Posterior cingulate gyrus (tissue), 11 donors: ENCODE measurements at regions of chr1 and their contacts with region 1.

Region 1: GRCh38 chr1:105793536-105794146 is 1262.8 kb upstream of the PRMT6 start:
- DNase-seq: peak in 6 of 10 donors; percentile 24 to 79 (median 40)

Region 2: DNA sequence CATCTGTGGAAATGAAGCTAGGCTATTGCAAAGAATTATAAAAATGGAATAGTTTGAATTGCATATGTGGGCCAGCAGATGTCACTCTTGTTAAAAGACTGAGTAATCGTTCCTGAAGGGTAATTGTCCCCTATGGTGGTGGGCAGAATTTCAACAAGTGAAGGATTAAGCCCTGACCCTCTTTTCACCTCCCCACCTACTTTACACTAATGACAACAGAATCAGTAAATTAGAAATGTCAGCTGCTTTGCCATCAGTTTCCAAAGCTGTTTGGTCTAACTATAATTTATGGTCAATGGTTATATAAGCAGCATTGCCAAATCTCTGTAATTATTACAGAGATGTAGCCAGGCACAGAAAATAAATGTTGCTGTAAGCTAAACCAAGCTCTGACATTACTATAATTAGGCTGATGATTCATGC is 1145.4 kb before region 1 on chr1:
- intact Hi-C with region 1: loop called (anchors 10 kb)
- DNase-seq: no peak

Region 3: DNA sequence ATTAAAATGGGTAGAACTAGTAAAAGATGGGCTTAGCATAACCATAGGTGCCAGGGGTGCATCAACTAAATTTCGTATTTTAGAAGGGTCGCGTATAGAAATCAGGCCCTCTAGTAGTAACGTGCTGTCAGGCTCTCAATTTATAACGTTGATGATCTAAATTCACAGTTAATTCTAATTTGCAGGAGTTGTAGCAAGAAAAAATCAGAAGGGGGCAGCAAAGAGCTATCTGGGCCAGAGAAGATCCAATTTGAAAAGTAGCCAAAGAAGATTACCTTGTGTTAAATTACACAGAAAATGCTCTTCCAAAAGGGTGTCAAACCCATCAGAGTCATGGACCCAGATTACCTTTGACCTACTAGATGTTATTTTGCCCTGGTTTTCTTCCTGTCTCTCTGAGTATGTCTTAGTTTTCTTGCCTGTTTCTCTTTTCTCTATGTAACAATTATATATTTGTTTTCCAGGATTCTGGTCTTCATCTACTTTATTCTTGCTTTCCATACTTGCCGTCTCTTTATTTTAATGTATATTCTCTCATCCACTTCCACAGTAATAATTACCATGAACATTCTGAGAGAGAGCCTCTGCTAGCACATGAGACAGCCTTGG is 1013.1 kb before region 1 on chr1:
- intact Hi-C with region 1: loop called (anchors 2 kb)
- DNase-seq: no peak

Region 4: GRCh38 chr1:104878203-104878909 is 915.3 kb before region 1 on chr1:
- intact Hi-C with region 1: no loop called
- DNase-seq: no peak